Lower leg skin (tissue), 4 donors: ENCODE measurements at regions of chr19 and their contacts with region 1.

Region 1: DNA sequence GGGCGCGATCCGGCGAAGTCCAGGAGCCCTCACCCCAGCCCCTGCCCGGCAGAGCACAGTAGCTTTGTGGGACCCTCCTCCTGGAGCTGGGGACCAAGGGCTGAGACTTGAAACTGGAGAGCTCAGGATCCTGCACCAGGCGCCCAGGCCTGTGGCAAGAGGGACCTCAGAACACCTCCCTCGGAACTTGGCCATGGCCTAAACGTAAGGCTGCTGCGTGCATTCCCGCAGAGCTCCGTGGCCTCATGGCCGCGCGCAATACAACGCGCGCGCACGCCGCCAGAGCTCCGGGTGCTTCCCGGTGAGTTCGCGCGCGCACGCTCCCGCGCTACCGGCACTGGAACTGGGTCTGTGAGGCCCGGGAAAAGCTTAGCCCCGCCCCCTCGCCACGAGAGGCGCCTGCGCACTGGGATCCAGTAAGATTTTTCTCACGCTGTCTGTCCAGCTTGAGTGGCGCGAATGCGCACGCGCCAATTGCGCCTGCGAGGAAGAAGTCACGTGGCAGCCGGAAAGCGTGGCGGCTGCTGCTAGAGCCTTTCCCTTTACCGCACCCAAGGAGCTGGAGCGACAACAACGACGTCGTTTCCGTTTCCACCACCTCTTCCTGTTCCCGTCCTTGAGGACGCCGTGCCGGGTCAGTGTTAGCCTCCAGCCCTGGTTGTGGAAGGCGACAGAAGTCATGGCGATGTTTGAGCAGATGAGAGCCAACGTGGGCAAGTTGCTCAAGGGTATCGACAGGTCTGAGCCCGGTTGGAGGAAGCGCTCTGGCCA is at the start of gene EIF3K:
- DNase-seq: peak; percentile 98 to 100
- H3K4me3 ChIP-seq: peak within 1 kb of the TSS; percentile 92
- CTCF ChIP-seq: no peak
- POLR2A ChIP-seq: peak in 1 of 2 donors; percentile 21
- total RNA-seq, gene EIF3K: 417 to 543 (median 453) TPM

Region 2: DNA sequence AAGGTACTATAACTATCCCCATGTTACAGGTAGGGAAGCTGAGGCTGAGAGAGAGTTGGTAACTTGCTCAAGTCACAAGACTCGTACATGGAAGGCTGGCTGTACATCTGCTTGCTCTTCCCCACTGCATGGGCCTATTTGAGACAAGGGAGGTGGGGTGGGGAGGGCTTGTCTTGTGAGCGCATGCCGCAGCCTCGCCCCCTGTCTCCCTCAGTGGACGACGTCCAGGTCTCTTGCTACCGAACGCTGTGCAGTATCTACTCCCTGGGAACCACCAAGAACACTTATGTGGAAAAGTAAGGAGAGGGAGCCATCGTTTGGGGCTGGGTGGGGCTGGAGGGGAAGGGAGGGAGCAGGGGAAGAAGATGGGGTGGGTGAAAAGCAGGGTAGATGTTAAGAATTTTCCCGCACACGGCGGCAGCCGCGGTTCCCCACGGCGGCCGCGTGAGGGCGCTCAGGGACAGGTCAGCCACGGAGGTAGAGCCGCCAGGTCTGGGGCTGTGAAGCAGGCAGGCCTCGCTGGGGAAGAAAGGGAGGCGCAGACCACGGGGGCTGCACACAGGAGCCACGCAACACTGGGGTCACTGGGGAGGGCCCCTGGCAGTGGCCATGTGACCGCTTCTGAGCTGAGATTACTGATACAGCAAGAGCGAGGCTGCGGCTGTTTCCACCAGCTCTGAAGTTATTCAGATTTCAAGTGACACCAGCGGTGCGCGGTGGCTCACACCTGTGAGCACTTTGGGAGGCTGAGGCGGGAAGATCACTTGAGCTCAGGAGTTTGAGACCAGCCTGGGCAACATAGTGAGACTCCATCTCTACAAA is 103.8 kb before region 1 on chr19:
- intact Hi-C with region 1: loop called (anchors 10 kb)
- DNase-seq: peak; percentile 29 to 90
- H3K4me3 ChIP-seq: no peak overlapping the region
- CTCF ChIP-seq: no peak
- POLR2A ChIP-seq: no peak

Region 3: DNA sequence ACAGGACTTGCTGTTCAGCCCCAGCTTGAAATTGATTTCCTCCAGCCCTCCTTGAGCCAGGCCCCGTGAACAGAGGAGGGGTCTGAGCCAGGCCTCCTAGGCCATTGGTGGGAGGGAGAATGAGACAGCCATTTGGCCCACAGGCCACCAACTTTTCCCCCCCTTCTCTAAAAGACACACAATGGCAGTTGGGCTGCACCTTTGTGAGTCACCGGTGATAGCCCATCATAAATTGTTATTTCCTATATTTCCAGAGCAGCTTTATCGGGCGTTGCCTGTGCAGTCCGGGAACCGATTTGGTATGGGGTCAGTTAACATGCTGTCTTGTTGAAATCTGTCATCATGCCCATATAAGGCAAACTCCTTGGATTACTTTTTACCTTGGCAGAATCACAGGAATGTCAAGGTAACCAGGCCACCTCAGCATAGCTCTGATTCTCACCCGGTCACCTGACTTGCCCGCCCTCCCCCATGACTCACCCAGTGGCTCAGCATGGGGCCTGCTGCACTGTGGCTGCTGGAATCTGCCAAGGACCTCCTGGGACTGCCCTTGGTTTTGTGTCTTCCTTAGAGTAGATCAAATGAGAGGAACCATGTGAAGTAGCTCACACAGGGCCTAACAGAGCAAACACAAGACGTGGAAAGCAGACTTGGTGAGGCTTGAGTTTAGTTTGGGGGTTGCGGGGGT is 64.8 kb after region 1 on chr19:
- intact Hi-C with region 1: no loop called
- DNase-seq: peak; percentile 81 to 95
- H3K4me3 ChIP-seq: no peak overlapping the region
- CTCF ChIP-seq: no peak
- POLR2A ChIP-seq: no peak